MCF 10A (cell line): ENCODE measurements at regions of chr11 and their contacts with region 1.

Region 1: GRCh38 chr11:63681321-63682049 is at the start of gene RTN3:
- DNase-seq: peak; percentile 97
- H3K4me3 Mint-ChIP-seq: peak within 1 kb of the TSS; percentile 92
- H3K27ac Mint-ChIP-seq: peak within 1 kb of the TSS; percentile 52
- H3K4me1 Mint-ChIP-seq: peaks cover 21% of the 10 kb centered on the region
- H3K27me3 Mint-ChIP-seq: no peaks in the 10 kb centered on the region
- CTCF ChIP-seq: no peak
- total RNA-seq, gene RTN3: 95.4 and 129 TPM in 2 replicates

Region 2: GRCh38 chr11:63567044-63567840 is 114.2 kb before region 1 on chr11:
- CTCF ChIA-PET with region 1: no interaction called
- POLR2A ChIA-PET with region 1: interaction called, 11 read pairs
- intact Hi-C with region 1: no loop called
- DNase-seq: peak; percentile 82
- H3K4me3 Mint-ChIP-seq: no peak overlapping the region
- H3K27ac Mint-ChIP-seq: peak overlapping the region; percentile 98
- H3K4me1 Mint-ChIP-seq: peaks cover 45% of the 10 kb centered on the region
- H3K27me3 Mint-ChIP-seq: no peaks in the 10 kb centered on the region
- CTCF ChIP-seq: no peak

Region 3: GRCh38 chr11:63621931-63622782 is 59.3 kb before region 1 on chr11:
- CTCF ChIA-PET with region 1: no interaction called
- POLR2A ChIA-PET with region 1: interaction called, 12 read pairs
- intact Hi-C with region 1: no loop called
- DNase-seq: peak; percentile 26
- H3K4me3 Mint-ChIP-seq: no peak overlapping the region
- H3K27ac Mint-ChIP-seq: no peak overlapping the region
- H3K4me1 Mint-ChIP-seq: peaks cover 16% of the 10 kb centered on the region
- H3K27me3 Mint-ChIP-seq: no peaks in the 10 kb centered on the region
- CTCF ChIP-seq: no peak

Region 4: GRCh38 chr11:63641727-63642126 is 39.8 kb before region 1 on chr11:
- CTCF ChIA-PET with region 1: interaction called, 4 read pairs
- POLR2A ChIA-PET with region 1: interaction called, 10 read pairs
- intact Hi-C with region 1: no loop called
- DNase-seq: no peak
- H3K4me3 Mint-ChIP-seq: no peak overlapping the region
- H3K27ac Mint-ChIP-seq: peak overlapping the region; percentile 14
- H3K4me1 Mint-ChIP-seq: no peaks in the 10 kb centered on the region
- H3K27me3 Mint-ChIP-seq: no peaks in the 10 kb centered on the region
- CTCF ChIP-seq: peak; percentile 12

Region 5: DNA sequence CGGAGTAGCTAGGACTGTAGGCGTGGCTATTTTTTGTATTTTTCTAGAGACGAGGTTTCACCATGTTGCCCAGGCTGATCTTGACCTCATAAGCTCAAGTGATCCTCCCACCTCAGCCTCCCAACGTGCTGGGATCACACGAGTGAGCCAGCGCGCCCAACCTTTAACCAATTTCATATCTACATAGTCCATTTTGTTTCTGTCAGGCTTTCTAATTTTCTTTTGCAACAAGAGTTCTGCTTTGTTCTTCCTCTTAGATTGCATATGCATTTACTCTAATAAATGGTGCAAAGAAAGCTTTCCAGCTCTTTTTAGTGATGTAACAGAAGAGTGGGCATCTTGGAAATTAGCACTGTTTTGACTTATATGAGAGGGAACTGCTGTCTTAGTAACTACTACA is 13.1 kb after region 1 on chr11:
- CTCF ChIA-PET with region 1: no interaction called
- POLR2A ChIA-PET with region 1: interaction called, 12 read pairs
- intact Hi-C with region 1: no loop called
- DNase-seq: no peak
- H3K4me3 Mint-ChIP-seq: no peak overlapping the region
- H3K27ac Mint-ChIP-seq: no peak overlapping the region
- H3K4me1 Mint-ChIP-seq: peaks cover 20% of the 10 kb centered on the region
- H3K27me3 Mint-ChIP-seq: no peaks in the 10 kb centered on the region
- CTCF ChIP-seq: no peak

Region 6: DNA sequence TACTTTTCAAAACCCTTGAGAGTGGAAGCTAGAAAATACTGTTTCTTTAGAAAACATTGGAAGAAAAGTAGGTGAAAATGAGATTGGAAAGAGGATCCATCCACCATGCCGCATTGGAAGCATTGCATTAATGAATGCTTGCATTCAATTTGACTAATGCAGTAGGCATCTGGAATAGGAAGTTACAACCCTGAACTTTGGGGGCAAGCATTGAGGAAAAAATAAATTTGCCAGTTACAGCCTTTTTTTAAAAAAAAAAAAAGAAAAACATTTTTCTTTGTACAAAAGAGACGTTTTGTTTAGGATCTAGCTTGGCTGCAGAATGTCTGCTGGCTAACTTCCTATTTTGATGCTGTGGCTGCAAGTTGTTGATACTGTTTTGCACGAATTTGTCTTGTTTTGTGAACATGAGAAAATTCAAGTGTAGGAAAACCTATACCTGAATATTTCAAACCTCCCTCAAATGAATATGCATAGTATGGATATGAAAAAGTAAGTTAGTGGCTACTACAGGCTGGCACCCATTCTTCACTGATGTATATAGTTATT is 27.9 kb after region 1 on chr11:
- CTCF ChIA-PET with region 1: interaction called, 5 read pairs
- POLR2A ChIA-PET with region 1: interaction called, 15 read pairs
- intact Hi-C with region 1: no loop called
- DNase-seq: no peak
- H3K4me3 Mint-ChIP-seq: no peak overlapping the region
- H3K27ac Mint-ChIP-seq: no peak overlapping the region
- H3K4me1 Mint-ChIP-seq: peaks cover 4% of the 10 kb centered on the region
- H3K27me3 Mint-ChIP-seq: no peaks in the 10 kb centered on the region
- CTCF ChIP-seq: no peak